Activated T-helper 2 cell treated with anti-CD3 and anti-CD28 coated beads, Interferon-gamma antibody, Interleukin-2, Interleukin-4, amounts not matched to agents 10 μg/mL and 5 μg/mL and 100 μg/mL, durations not matched to agents 14 hours and 24 hours and 36 hours (primary cell): ENCODE measurements at regions of chr2 and their contacts with region 1.

Region 1: GRCh38 chr2:200888704-200889625 is at the starts of genes NIF3L1 and PPIL3:
- DNase-seq: peak; percentile 97
- H3K4me3 Mint-ChIP-seq: peak within 1 kb of the TSS; percentile 95
- H3K27ac Mint-ChIP-seq: peak within 1 kb of the TSS; percentile 100
- H3K4me1 Mint-ChIP-seq: peaks cover 45% of the 10 kb centered on the region
- H3K27me3 Mint-ChIP-seq: no peaks in the 10 kb centered on the region
- total RNA-seq, gene NIF3L1: 23.9 and 24.8 TPM in 2 replicates
- total RNA-seq, gene PPIL3: 55.4 and 57.8 TPM in 2 replicates

Region 2: DNA sequence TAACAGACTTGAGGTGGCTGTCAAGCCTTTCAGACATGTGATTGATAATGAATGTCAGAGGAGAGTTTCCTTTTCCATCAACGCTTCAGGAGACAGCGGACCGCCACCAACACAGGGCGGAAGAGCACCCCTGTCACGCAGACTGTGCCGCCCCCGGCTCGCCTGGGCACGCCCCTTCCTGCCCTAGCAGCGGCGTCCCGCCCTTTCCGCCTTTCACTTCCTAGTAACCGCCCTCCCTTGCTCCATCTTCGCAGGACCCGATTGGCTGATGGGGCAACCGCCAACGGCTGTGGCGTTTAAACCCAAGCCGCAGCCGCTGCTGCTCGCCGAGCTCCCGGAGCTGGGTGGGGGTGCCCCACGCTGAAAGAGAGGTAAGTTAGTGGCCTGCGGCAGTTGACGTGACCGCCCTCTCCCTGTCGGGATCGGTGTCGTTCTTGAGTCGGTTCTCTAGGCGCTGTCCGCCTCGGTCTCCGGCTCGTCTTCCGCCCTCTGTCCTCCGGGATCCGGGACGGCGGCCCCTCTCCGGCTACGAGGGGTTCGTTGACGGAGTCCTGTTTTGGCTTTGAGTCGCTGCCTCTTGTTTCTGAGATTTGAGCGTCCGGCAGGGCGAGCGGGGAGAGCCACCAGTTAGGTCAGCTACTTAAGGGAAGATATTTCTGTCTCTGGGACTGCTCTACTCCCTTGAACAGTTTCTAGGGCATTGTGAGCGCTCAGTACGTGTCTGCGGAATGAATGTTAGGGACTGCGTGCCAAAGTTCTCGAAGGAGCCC is 362.9 kb before region 1 on chr2 and contains the start of gene SGO2:
- intact Hi-C with region 1: loop called (anchors 2 kb)
- DNase-seq: peak; percentile 96
- H3K4me3 Mint-ChIP-seq: peak within 1 kb of the TSS; percentile 98
- H3K27ac Mint-ChIP-seq: peak within 1 kb of the TSS; percentile 94
- H3K4me1 Mint-ChIP-seq: peaks cover 30% of the 10 kb centered on the region
- H3K27me3 Mint-ChIP-seq: no peaks in the 10 kb centered on the region
- total RNA-seq, gene SGO2: 30.3 and 32.3 TPM in 2 replicates

Region 3: GRCh38 chr2:200713003-200713703 is 175.8 kb before region 1 on chr2:
- intact Hi-C with region 1: loop called (anchors 2 kb)
- DNase-seq: peak; percentile 89
- H3K4me3 Mint-ChIP-seq: peak overlapping the region; percentile 69
- H3K27ac Mint-ChIP-seq: peak overlapping the region; percentile 99
- H3K4me1 Mint-ChIP-seq: peaks cover 38% of the 10 kb centered on the region
- H3K27me3 Mint-ChIP-seq: no peaks in the 10 kb centered on the region

Region 4: DNA sequence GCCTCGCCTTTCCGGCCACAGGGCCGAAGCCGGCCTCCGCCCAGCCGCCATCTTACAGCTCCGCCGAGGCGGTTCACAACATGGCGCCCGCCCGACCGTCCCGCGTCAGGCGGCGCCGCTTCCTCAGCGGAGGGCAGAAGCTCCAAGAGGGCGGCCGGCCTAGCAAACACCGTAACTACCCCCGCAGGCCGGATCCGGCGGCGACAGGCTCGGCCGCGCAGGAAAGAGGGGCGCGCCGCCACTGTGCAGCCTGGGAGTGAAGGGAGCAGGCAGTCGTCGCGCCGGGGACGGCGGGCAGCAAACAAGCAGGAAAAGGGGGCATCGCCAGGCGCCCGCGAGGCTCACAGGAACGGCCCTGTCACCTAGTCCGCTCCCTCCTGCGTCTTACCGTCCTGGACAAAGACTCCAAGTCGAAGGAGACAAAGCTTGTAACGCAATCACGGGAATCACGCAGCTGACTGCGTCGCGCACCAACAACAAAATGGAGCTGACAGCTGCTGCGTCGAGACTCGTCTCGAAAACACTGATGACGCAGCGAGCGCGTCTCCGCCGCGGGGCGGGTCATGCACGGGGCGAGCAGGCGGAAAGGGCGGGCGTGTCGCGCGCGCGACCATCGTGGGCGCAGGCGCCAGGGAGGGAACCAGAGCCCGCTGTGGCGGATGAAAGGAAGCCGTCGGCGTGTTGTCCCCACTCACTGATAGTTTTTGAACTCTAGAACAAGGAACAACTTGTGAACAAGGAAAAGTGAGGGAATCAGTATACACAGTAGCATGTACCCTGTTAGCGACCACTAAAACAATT is 24.6 kb before region 1 on chr2 and contains the start of gene CLK1:
- intact Hi-C with region 1: loop called (anchors 1 kb)
- DNase-seq: peak; percentile 91
- H3K4me3 Mint-ChIP-seq: peak within 1 kb of the TSS; percentile 93
- H3K27ac Mint-ChIP-seq: peak within 1 kb of the TSS; percentile 94
- H3K4me1 Mint-ChIP-seq: peaks cover 32% of the 10 kb centered on the region
- H3K27me3 Mint-ChIP-seq: no peaks in the 10 kb centered on the region
- total RNA-seq, gene CLK1: 114 and 122 TPM in 2 replicates

Region 5: DNA sequence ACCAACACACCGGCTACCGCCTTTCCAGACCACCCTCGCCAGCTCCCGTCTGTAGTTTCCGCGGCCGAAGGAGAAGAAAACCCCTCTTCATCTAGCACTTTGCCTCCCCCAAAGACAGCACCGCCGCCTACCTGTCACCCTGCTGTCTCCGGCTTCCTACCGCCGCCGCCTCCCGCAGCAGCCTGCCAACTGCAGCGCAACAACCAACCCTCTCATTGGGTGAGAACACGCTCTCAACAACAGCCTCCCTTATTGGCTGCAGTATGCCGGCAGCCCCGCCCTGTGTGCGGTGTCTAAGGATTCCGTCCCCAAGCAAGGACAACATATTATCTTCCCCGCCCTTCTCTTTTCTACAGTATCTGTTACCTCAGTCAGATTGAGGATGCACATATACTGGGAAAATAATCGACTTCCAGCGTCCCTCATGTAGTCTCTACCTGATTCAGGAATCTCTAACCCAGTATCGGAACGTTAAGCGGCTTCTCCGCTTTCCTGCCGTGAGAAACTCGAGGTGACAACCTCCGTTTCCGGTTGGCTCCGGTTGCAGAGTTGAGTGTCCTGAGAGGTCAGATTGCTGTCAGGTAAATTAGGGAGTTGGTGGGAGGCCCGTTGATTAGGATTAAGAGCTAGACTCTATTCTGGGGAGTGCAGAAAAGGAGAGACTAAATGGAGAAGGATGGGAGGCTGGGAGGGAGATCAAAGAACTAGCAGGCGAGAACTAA is 182.7 kb after region 1 on chr2 and contains the starts of genes HYCC2 and NDUFB3:
- intact Hi-C with region 1: loop called (anchors 1 kb)
- DNase-seq: peak; percentile 92
- H3K4me3 Mint-ChIP-seq: peak within 1 kb of the TSS; percentile 93
- H3K27ac Mint-ChIP-seq: peak within 1 kb of the TSS; percentile 93
- H3K4me1 Mint-ChIP-seq: peaks cover 37% of the 10 kb centered on the region
- H3K27me3 Mint-ChIP-seq: no peaks in the 10 kb centered on the region
- total RNA-seq, gene HYCC2: 20.1 and 23.8 TPM in 2 replicates
- total RNA-seq, gene NDUFB3: 123 and 125 TPM in 2 replicates

Region 6: DNA sequence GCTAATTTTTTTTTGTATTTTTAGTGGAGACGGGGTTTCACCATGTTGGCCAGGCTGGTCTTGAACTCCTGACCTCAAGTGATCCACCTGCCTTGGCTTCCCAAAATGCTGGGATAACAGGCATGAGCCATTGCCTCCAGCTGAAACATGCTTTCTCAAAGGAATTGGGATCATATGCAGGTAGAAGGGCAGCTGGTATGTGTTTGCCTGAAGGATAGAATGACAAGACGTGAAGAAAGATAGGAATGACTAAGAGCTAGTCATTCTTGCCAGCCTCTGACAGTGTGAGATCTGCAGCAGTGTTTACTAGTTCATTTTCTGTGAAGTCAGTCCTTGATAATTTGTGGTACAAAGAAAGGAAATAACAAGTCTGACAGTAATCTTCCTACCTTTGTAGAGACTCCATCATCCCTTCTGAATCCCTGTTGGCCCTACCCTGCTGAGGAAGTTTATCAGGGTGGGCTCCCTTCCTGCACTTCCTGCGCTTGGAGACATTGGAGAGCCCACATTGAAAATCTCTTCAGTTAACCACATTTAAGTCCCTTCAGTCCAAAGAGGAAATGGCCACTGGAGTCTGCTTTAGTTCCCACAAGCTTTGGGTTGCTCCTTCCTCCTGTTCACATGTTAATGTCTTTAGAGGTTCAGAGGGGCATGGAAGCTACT is 241.7 kb after region 1 on chr2:
- intact Hi-C with region 1: loop called (anchors 2 kb)
- DNase-seq: no peak
- H3K4me3 Mint-ChIP-seq: peak overlapping the region; percentile 90
- H3K27ac Mint-ChIP-seq: peak overlapping the region; percentile 92
- H3K4me1 Mint-ChIP-seq: peaks cover 50% of the 10 kb centered on the region
- H3K27me3 Mint-ChIP-seq: no peaks in the 10 kb centered on the region